ENCODE measurements at regions of chr21 and their contacts with region 1.

Region 1: GRCh38 chr21:42892931-42893755 is at the start of gene NDUFV3:
- DNase-seq: peak; percentile 96 to 100 (median 98)
- ATAC-seq: peak; percentile 96
- H3K4me3 ChIP-seq: peak within 1 kb of the TSS; percentile 94
- H3K4me3 Mint-ChIP-seq: peak within 1 kb of the TSS; percentile 87 to 96 (median 90)
- H3K27ac ChIP-seq: peak within 1 kb of the TSS; percentile 97
- H3K27ac Mint-ChIP-seq: peak within 1 kb of the TSS; percentile 92 to 98 (median 97)
- H3K4me1 ChIP-seq: peaks cover 6 to 8% of the 10 kb centered on the region in 2 donors
- H3K4me1 Mint-ChIP-seq: peaks cover 14 to 25% (median 22%) of the 10 kb centered on the region in 7 donors
- H3K27me3 ChIP-seq: no peaks in the 10 kb centered on the region
- H3K27me3 Mint-ChIP-seq: no peaks in the 10 kb centered on the region
- total RNA-seq, gene NDUFV3: 25.3 to 33.1 (median 30.9) TPM

Region 2: GRCh38 chr21:42878993-42879787 is 14.0 kb before region 1 on chr21 and contains the start of gene WDR4:
- CTCF ChIA-PET with region 1: no interaction called
- POLR2A ChIA-PET with region 1: interaction called, 44 read pairs
- intact Hi-C with region 1: loop called (anchors 1 kb)
- DNase-seq: peak; percentile 97 to 100 (median 99)
- ATAC-seq: peak; percentile 97
- H3K4me3 ChIP-seq: peak within 1 kb of the TSS; percentile 66
- H3K4me3 Mint-ChIP-seq: peak within 1 kb of the TSS; percentile 93 to 99 (median 97)
- H3K27ac ChIP-seq: peak within 1 kb of the TSS; percentile 85
- H3K27ac Mint-ChIP-seq: peak within 1 kb of the TSS; percentile 94 to 100 (median 98)
- H3K4me1 ChIP-seq: peaks cover 12 to 15% of the 10 kb centered on the region in 2 donors
- H3K4me1 Mint-ChIP-seq: peaks cover 17 to 41% (median 29%) of the 10 kb centered on the region in 7 donors
- H3K27me3 ChIP-seq: no peaks in the 10 kb centered on the region
- H3K27me3 Mint-ChIP-seq: peaks cover 0 to 6% (median 0%) of the 10 kb centered on the region in 5 donors
- total RNA-seq, gene WDR4: 24.4 to 39.1 (median 30.5) TPM

Region 3: GRCh38 chr21:43718872-43719747 is 826.0 kb after region 1 on chr21 and contains the start of gene PDXK:
- CTCF ChIA-PET with region 1: no interaction called
- POLR2A ChIA-PET with region 1: interaction called, 3 read pairs
- intact Hi-C with region 1: loop called in 1 of 2 experiments (anchors 5 kb)
- DNase-seq: peak; percentile 73 to 90 (median 77)
- ATAC-seq: peak; percentile 92
- H3K4me3 ChIP-seq: peak within 1 kb of the TSS; percentile 90
- H3K4me3 Mint-ChIP-seq: peak within 1 kb of the TSS; percentile 77 to 93 (median 87)
- H3K27ac ChIP-seq: peak within 1 kb of the TSS; percentile 86
- H3K27ac Mint-ChIP-seq: peak within 1 kb of the TSS; percentile 43 to 86 (median 72)
- H3K4me1 ChIP-seq: peaks cover 12 to 19% of the 10 kb centered on the region in 2 donors
- H3K4me1 Mint-ChIP-seq: peaks cover 20 to 31% (median 26%) of the 10 kb centered on the region in 7 donors
- H3K27me3 ChIP-seq: no peaks in the 10 kb centered on the region
- H3K27me3 Mint-ChIP-seq: peaks cover 0 to 19% (median 0%) of the 10 kb centered on the region in 5 donors
- total RNA-seq, gene PDXK: 71.1 to 103 (median 97.0) TPM

Measured in naive thymus-derived CD4-positive, alpha-beta T cell (primary cell).